B cell (primary cell): ENCODE measurements at regions of chr17 and their contacts with region 1.

Region 1: GRCh38 chr17:76121932-76122430 is 18.4 kb upstream of the EXOC7 start:
- DNase-seq: peak; percentile 49
- ATAC-seq: peak; percentile 11
- H3K4me3 ChIP-seq: peak overlapping the region in 4 of 5 experiments; percentile 32 to 66 (median 50)
- H3K4me3 Mint-ChIP-seq: peak overlapping the region; percentile 71
- H3K27ac ChIP-seq: no peak overlapping the region
- H3K27ac Mint-ChIP-seq: peak overlapping the region; percentile 53
- H3K4me1 ChIP-seq: peaks cover 18 to 21% of the 10 kb centered on the region in 2 donors
- H3K4me1 Mint-ChIP-seq: peaks cover 16% of the 10 kb centered on the region
- H3K27me3 ChIP-seq: peaks cover 0 to 6% (median 0%) of the 10 kb centered on the region in 4 experiments
- H3K27me3 Mint-ChIP-seq: peaks cover 2% of the 10 kb centered on the region
- CTCF ChIP-seq: no peak

Region 2: DNA sequence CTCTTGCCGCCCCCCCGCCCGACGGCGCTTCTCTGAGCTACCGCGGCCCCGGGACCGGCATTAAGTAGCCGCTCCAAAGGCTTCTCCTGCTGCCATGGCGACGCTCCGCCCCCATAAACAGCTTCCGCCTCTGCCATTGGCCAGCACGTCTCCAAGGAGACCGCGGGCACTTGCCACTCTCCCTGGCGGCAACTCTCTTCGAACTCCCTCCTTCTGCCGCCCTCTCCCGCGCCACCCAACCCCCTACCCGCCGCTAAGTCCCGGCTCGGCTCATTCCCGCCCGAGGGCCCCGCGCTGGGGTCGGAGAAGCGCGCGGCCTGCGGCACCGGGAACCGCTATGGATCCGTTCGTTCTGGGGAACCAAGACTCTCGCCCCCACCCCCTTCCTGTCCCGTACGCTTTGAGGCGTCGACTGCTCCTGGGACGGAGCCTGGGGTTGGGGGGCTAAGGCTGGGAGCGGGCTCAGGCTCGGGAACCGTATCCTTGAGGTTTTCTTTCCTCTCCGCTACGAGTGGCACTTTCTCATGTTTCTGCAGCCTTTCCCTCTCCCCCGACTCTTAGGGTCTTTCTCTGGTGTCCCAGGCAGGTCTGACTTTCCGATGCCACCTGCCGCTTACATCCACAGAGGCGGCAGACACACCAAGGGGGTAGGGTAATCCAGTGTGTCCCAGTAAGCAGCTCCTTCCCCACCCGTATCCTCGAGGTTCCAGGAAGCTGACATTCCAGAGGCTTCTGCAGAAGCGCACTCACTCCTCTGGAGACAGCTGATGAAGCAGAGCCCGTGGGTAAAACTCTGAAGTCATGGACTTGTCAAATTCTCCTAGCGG is 19.4 kb after region 1 on chr17 and contains the start of gene FOXJ1:
- CTCF ChIA-PET with region 1: interaction called, 4 read pairs
- POLR2A ChIA-PET with region 1: no interaction called
- intact Hi-C with region 1: loop called (anchors 1 kb)
- DNase-seq: peak; percentile 95
- ATAC-seq: peak; percentile 73
- H3K4me3 ChIP-seq: peak within 1 kb of the TSS in 4 of 5 experiments; percentile 55 to 81 (median 58)
- H3K4me3 Mint-ChIP-seq: peak within 1 kb of the TSS; percentile 90
- H3K27ac ChIP-seq: no peak within 1 kb of the TSS
- H3K27ac Mint-ChIP-seq: peak within 1 kb of the TSS; percentile 75
- H3K4me1 ChIP-seq: peaks cover 54 to 63% of the 10 kb centered on the region in 2 donors
- H3K4me1 Mint-ChIP-seq: peaks cover 54% of the 10 kb centered on the region
- H3K27me3 ChIP-seq: peaks cover 0 to 43% (median 11%) of the 10 kb centered on the region in 4 experiments
- H3K27me3 Mint-ChIP-seq: peaks cover 14% of the 10 kb centered on the region
- CTCF ChIP-seq: no peak
- total RNA-seq, gene FOXJ1: 0.12 and 0.20 TPM in 2 replicates

Region 3: DNA sequence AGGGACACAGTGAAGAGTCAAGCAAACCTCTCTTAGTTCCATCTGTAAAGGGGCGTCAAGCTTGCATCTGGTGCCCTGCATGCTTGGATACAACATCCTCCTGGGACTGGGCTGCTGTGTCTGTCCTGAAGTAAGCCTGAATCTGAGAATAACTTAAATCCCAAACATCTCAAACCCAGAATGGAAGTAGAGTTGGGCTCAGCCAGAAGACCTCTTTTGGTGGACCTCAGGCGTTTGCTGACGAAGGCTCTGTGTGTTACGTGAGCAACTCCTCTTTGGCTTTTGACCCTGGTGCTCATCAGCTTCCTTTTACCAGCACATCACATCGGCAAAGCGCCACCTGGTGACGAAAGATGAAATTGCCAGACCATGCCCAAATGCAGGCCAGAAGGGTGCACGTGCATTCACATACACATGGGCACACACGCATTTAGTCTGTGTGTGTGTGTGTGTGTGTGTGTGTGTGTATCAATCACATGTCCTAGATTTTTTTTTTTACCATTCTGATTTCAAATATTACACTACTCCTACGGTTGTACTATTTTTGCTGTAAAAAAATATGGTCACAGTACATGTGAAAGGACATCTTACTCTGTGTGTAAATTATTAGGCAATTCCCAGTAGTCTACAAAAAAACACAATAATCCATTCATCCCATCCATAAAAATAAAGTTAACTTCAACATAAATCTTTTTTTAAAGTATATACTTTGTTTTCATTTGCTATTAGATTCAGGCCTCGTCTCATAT is 60.2 kb after region 1 on chr17:
- CTCF ChIA-PET with region 1: interaction called, 169 read pairs
- POLR2A ChIA-PET with region 1: interaction called, 4 read pairs
- intact Hi-C with region 1: loop called (anchors 1 kb)
- DNase-seq: peak; percentile 95
- ATAC-seq: peak; percentile 96
- H3K4me3 ChIP-seq: no peak overlapping the region
- H3K4me3 Mint-ChIP-seq: peak overlapping the region; percentile 1
- H3K27ac ChIP-seq: no peak overlapping the region
- H3K27ac Mint-ChIP-seq: peak overlapping the region; percentile 74
- H3K4me1 ChIP-seq: peaks cover 10 to 11% of the 10 kb centered on the region in 2 donors
- H3K4me1 Mint-ChIP-seq: peaks cover 20% of the 10 kb centered on the region
- H3K27me3 ChIP-seq: no peaks in the 10 kb centered on the region
- H3K27me3 Mint-ChIP-seq: no peaks in the 10 kb centered on the region
- CTCF ChIP-seq: peak; percentile 89

Region 4: DNA sequence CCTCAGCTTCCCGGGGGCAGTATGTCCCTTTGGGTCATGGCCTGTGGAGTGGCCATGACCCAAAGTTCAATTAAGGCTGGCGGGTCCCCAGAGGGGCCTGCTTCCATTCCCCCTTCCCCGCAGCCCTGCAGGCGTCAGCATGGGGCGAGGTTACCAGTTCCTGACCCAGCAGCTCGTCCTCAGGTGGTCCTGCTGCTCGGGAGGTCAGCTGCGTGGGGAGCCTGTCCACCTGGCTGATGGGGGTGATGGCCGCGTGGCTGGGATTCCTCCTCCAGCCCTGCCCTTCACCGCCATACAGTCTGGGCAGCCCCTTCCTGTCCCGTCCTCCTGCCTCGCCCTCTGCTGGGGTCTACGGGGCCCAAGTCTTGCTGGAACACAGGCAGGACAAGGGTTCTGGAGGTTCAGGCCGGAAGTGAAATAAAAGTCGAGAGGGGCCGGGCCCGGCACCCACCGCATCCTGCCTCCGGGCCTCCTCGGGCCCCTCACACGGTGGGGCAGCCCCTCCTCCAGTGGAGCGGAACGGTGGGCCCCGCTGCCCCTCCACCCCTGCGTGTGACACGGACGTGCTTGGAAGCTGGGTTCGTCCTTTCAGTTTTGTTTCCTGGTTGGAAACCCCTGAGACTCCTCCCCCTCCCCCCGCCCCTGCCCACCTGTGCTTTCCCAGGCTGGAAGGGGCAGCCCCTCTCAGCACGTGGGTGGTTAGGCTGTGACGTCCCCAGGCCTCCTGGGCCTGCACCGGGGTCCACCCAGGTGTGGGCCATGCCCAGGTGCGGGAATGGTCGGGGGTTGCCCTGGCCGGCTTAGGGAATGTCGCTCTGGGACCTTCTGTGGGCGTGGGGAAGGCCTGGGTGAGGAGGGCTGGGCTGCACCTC is 149.9 kb after region 1 on chr17:
- CTCF ChIA-PET with region 1: interaction called, 435 read pairs
- POLR2A ChIA-PET with region 1: interaction called, 10 read pairs
- intact Hi-C with region 1: no loop called
- DNase-seq: peak; percentile 97
- ATAC-seq: peak; percentile 55
- H3K4me3 ChIP-seq: peak overlapping the region in 4 of 5 experiments; percentile 41 to 61 (median 52)
- H3K4me3 Mint-ChIP-seq: peak overlapping the region; percentile 82
- H3K27ac ChIP-seq: peak overlapping the region; percentile 97 to 99
- H3K27ac Mint-ChIP-seq: peak overlapping the region; percentile 93
- H3K4me1 ChIP-seq: peaks cover 87 to 98% of the 10 kb centered on the region in 2 donors
- H3K4me1 Mint-ChIP-seq: peaks cover 86% of the 10 kb centered on the region
- H3K27me3 ChIP-seq: no peaks in the 10 kb centered on the region
- H3K27me3 Mint-ChIP-seq: no peaks in the 10 kb centered on the region
- CTCF ChIP-seq: no peak

Region 5: GRCh38 chr17:76296186-76296585 is 174.2 kb after region 1 on chr17:
- CTCF ChIA-PET with region 1: interaction called, 18 read pairs
- POLR2A ChIA-PET with region 1: interaction called, 3 read pairs
- intact Hi-C with region 1: loop called (anchors 1 kb)
- DNase-seq: no peak
- ATAC-seq: no peak
- H3K4me3 ChIP-seq: no peak overlapping the region
- H3K4me3 Mint-ChIP-seq: no peak overlapping the region
- H3K27ac ChIP-seq: no peak overlapping the region
- H3K27ac Mint-ChIP-seq: no peak overlapping the region
- H3K4me1 ChIP-seq: no peaks in the 10 kb centered on the region
- H3K4me1 Mint-ChIP-seq: no peaks in the 10 kb centered on the region
- H3K27me3 ChIP-seq: no peaks in the 10 kb centered on the region
- H3K27me3 Mint-ChIP-seq: no peaks in the 10 kb centered on the region
- CTCF ChIP-seq: no peak